ENCODE measurements at regions of chr3 and their contacts with region 1.

Region 1: DNA sequence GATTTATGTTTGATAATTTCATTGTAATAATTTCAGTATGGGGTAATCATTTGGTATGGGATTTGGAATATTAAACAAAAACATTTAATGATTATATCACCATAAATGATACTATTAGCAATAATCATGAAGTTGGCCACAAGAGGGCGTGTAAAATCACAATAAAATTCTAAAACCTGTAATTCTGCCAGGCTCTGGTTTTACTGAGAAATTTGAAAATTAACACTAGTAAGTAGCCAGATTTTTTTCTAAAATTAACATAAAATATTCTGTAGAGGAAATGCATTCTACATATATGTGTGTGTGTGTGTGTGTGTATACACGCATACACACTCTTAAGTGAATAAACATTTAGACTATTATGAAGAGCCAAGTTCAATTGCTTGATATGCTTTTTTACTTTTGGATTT is 40.5 kb downstream of the FEZF2 start:
- DNase-seq: peak; percentile 30
- H3K4me3 Mint-ChIP-seq: no peak overlapping the region
- H3K27ac Mint-ChIP-seq: no peak overlapping the region
- H3K4me1 Mint-ChIP-seq: no peaks in the 10 kb centered on the region
- H3K27me3 Mint-ChIP-seq: peaks cover 83% of the 10 kb centered on the region
- CTCF ChIP-seq: peak; percentile 57

Region 2: GRCh38 chr3:62558549-62559112 is 225.8 kb after region 1 on chr3:
- CTCF ChIA-PET with region 1: interaction called, 118 read pairs
- POLR2A ChIA-PET with region 1: interaction called, 3 read pairs
- intact Hi-C with region 1: loop called (anchors 1 kb)
- DNase-seq: peak; percentile 48
- H3K4me3 Mint-ChIP-seq: no peak overlapping the region
- H3K27ac Mint-ChIP-seq: no peak overlapping the region
- H3K4me1 Mint-ChIP-seq: peaks cover 13% of the 10 kb centered on the region
- H3K27me3 Mint-ChIP-seq: no peaks in the 10 kb centered on the region
- CTCF ChIP-seq: peak; percentile 45

Region 3: GRCh38 chr3:62632510-62633214 is 299.8 kb after region 1 on chr3:
- CTCF ChIA-PET with region 1: no interaction called
- POLR2A ChIA-PET with region 1: no interaction called
- intact Hi-C with region 1: loop called (anchors 10 kb)
- DNase-seq: no peak
- H3K4me3 Mint-ChIP-seq: no peak overlapping the region
- H3K27ac Mint-ChIP-seq: no peak overlapping the region
- H3K4me1 Mint-ChIP-seq: no peaks in the 10 kb centered on the region
- H3K27me3 Mint-ChIP-seq: no peaks in the 10 kb centered on the region
- CTCF ChIP-seq: no peak